ENCODE measurements at regions of chr22 and their contacts with region 1.

Region 1: GRCh38 chr22:36439481-36440271 is 41.8 kb downstream of the TXN2 start:
- DNase-seq: peak; percentile 59
- H3K4me3 ChIP-seq: no peak overlapping the region
- CTCF ChIP-seq: no peak

Region 2: GRCh38 chr22:36339171-36340065 is 100.3 kb before region 1 on chr22:
- in situ Hi-C with region 1: loop called (anchors 5 kb)
- DNase-seq: no peak
- H3K4me3 ChIP-seq: no peak overlapping the region
- CTCF ChIP-seq: no peak

Region 3: GRCh38 chr22:36365020-36365411 is 74.7 kb before region 1 on chr22:
- in situ Hi-C with region 1: loop called (anchors 5 kb)
- DNase-seq: peak; percentile 65
- H3K4me3 ChIP-seq: no peak overlapping the region
- CTCF ChIP-seq: no peak

Region 4: DNA sequence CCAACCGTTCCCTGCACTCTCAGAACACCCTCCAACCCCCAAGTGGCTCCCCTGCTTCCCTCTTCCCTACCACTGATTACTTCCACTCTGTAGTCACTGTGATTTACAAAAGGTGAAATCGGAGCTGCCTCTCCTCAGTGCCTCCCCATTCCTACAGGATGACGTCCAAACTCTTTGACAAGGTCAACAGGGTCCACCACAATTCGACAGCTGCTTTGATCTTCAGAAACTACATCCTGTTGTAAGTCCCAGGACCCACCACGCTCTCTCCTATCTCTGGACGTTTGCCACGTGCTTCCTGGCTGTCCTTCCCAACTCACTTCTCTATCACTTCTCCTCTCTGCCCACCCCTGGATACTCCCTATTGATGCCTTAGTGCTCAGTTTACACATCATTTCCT is 174.3 kb after region 1 on chr22:
- in situ Hi-C with region 1: no loop called
- DNase-seq: peak; percentile 18
- H3K4me3 ChIP-seq: no peak overlapping the region
- CTCF ChIP-seq: no peak